ENCODE measurements at regions of chr21 and their contacts with region 1.

Region 1: GRCh38 chr21:42309753-42310221 is 5.4 kb downstream of the TFF3 start:
- DNase-seq: peak; percentile 84
- ATAC-seq: peak; percentile 78
- H3K4me3 Mint-ChIP-seq: no peak overlapping the region
- H3K27ac Mint-ChIP-seq: no peak overlapping the region
- H3K4me1 Mint-ChIP-seq: peaks cover 16% of the 10 kb centered on the region
- H3K27me3 Mint-ChIP-seq: peaks cover 9% of the 10 kb centered on the region

Region 2: DNA sequence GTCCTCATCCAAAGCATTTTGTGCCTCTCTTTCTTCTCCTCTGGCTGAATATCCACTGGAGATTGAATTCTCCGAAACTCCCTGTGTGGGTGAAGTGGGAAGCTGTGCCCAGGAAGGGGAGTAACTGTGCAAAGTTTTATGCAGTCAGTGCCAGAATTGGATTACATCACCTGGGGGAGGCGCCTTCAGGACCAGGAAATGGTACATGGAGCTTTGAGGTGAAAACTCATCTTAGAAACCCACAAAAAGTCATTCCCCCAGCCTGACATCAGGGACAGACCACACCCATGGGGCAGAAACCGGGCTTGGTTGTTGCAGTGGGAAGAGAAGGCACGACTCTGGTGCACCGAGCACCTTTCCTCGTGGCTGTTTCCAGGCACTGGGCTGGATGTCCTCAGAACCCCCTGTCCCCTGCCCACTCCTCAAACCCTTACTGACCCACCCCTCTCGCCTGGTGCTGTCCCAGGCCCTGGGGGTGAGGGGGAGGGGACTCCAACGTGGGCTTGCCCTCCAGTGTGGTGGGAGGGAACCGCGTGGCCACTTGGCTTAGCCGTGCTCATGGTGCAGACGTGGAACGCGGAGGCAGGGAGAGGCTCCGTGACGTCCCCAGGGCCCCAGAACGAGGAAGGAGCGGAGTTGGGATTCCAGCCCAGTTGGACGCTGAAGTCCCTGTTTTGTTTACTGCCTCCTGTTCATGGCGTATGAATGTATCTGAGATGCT is 10.3 kb before region 1 on chr21:
- CTCF ChIA-PET with region 1: interaction called, 12 read pairs
- POLR2A ChIA-PET with region 1: no interaction called
- DNase-seq: peak; percentile 67
- ATAC-seq: peak; percentile 81
- H3K4me3 Mint-ChIP-seq: no peak overlapping the region
- H3K27ac Mint-ChIP-seq: peak overlapping the region; percentile 18
- H3K4me1 Mint-ChIP-seq: peaks cover 22% of the 10 kb centered on the region
- H3K27me3 Mint-ChIP-seq: no peaks in the 10 kb centered on the region

Region 3: GRCh38 chr21:42337830-42338728 is 28.3 kb after region 1 on chr21:
- CTCF ChIA-PET with region 1: interaction called, 18 read pairs
- POLR2A ChIA-PET with region 1: no interaction called
- DNase-seq: peak; percentile 88
- ATAC-seq: peak; percentile 99
- H3K4me3 Mint-ChIP-seq: no peak overlapping the region
- H3K27ac Mint-ChIP-seq: peak overlapping the region; percentile 49
- H3K4me1 Mint-ChIP-seq: peaks cover 11% of the 10 kb centered on the region
- H3K27me3 Mint-ChIP-seq: peaks cover 18% of the 10 kb centered on the region

Region 4: DNA sequence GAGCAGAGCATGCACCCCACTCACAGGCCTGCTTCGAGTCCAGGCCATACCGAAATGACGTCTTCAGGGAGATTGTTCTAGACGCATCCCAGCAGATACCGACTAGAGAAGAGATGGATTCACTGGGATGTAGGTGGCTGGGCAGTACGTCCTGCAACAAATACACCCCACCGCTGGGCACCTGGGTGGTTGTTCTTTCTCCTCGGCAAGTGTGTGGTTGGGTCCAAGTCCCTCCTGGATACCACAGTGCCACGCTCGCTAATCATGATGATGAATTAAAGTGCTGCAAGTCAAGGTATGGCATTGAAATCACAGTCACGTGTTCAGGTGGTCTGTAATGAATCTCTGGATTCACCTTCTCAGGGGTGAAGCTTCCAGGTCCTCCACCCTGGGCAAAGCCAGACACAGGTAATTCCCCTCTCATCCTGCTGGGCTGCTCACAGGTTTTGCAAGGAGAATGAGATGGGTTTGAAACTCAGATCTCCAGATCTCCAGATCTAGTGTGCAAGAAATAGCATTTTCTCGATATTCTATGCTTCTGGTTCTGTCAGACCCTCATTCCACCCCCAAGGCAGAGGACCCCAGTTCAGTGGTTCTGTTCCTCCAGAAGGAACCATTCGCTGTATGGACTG is 139.6 kb after region 1 on chr21:
- CTCF ChIA-PET with region 1: interaction called, 29 read pairs
- POLR2A ChIA-PET with region 1: interaction called, 3 read pairs
- DNase-seq: no peak
- ATAC-seq: peak; percentile 4
- H3K4me3 Mint-ChIP-seq: no peak overlapping the region
- H3K27ac Mint-ChIP-seq: peak overlapping the region; percentile 85
- H3K4me1 Mint-ChIP-seq: peaks cover 59% of the 10 kb centered on the region
- H3K27me3 Mint-ChIP-seq: no peaks in the 10 kb centered on the region

Region 5: GRCh38 chr21:42574234-42575027 is 264.6 kb after region 1 on chr21:
- CTCF ChIA-PET with region 1: no interaction called
- POLR2A ChIA-PET with region 1: no interaction called
- DNase-seq: no peak
- ATAC-seq: no peak
- H3K4me3 Mint-ChIP-seq: no peak overlapping the region
- H3K27ac Mint-ChIP-seq: no peak overlapping the region
- H3K4me1 Mint-ChIP-seq: no peaks in the 10 kb centered on the region
- H3K27me3 Mint-ChIP-seq: no peaks in the 10 kb centered on the region

Region 6: DNA sequence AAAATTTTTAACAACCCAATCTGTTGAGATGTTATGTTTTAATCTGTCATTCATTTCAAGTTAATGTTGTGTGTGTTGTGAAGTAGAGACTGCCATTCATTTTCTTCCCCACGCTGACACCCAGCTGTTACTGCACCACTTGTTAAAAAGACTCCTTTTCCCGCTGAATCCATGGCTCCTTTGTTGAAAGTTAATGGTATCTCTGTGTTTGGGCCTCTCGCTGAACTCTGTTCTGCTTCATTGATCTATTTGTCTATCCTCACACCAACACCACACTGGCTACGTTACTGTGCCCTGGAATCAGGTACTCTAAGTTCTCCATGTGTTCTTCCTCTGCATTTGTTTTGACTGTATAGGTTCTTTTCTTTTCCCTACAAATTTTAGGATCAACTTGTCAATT is 401.9 kb after region 1 on chr21:
- CTCF ChIA-PET with region 1: no interaction called
- POLR2A ChIA-PET with region 1: no interaction called
- DNase-seq: no peak
- ATAC-seq: no peak
- H3K4me3 Mint-ChIP-seq: no peak overlapping the region
- H3K27ac Mint-ChIP-seq: no peak overlapping the region
- H3K4me1 Mint-ChIP-seq: no peaks in the 10 kb centered on the region
- H3K27me3 Mint-ChIP-seq: peaks cover 2% of the 10 kb centered on the region